ENCODE measurements at regions of chr5 and their contacts with region 1.

Region 1: GRCh38 chr5:179986328-179986727 is 78.6 kb upstream of the TBC1D9B start:
- DNase-seq: no peak
- H3K4me3 ChIP-seq: no peak overlapping the region
- H3K27ac ChIP-seq: no peak overlapping the region
- H3K4me1 ChIP-seq: no peaks in the 10 kb centered on the region
- H3K27me3 ChIP-seq: no peaks in the 10 kb centered on the region
- CTCF ChIP-seq: peak in 2 of 3 experiments; percentile 13 to 38
- EP300 ChIP-seq: no peak
- POLR2A ChIP-seq: no peak

Region 2: DNA sequence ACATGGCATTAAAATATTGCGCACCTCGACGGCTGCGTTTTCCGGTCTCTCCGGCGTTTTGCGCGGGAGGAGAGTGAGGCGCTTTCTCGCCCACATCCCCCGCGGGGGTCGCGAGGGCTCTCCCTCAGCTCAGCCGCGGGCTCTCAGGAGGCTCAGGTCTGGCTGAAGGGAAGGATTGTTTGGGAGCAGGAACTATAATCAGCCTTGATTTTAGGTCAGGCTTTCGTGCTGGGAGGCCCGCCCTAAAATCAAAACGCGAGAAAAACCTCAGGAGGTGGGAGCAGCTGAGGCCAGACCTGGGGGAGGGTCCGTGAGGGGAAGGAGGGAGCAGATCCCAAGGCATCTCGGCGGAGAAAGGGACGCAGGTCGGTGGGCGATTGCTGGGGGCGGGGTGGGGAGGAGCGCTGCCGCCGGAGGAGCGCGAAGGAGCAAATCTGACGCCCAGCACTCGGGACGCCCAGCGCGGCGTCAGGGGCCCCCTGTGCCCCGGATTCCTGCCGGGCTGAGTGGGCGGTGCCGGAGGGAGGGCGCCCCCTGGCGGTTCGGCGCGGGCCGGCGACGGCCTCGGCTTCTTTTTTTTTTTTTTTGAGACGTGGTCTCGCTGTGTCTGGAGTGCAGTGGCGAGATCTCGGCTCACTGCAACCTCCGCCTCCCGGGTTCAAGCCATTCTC is 103.9 kb after region 1 on chr5:
- intact Hi-C with region 1: loop called (anchors 5 kb)
- DNase-seq: no peak
- H3K4me3 ChIP-seq: peak overlapping the region; percentile 59 to 68 (median 67)
- H3K27ac ChIP-seq: peak overlapping the region; percentile 72 to 85 (median 82)
- H3K4me1 ChIP-seq: peaks cover 4 to 17% (median 14%) of the 10 kb centered on the region in 4 donors
- H3K27me3 ChIP-seq: no peaks in the 10 kb centered on the region
- CTCF ChIP-seq: peak; percentile 69 to 93 (median 86)
- EP300 ChIP-seq: no peak
- POLR2A ChIP-seq: no peak

Region 3: DNA sequence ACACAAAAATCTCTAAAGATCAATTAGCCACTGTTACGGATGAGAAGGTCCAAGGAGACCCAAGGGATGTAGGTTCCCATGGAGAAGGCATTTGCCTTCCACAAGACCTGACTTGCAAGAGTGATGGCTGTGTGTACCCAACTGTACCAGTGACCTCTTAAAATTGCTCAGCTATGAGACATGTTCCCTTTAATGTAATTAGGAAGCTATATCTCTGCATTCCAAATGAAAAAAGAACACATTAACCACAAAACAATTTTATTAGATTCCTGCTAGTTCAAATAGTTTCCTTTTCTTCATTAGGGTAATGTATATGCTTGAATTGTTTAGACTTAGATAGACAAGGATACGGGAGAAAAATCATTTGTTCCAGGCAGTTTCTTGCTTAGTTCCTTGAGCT is 750.2 kb after region 1 on chr5:
- intact Hi-C with region 1: no loop called
- DNase-seq: no peak
- H3K4me3 ChIP-seq: no peak overlapping the region
- H3K27ac ChIP-seq: no peak overlapping the region
- H3K4me1 ChIP-seq: no peaks in the 10 kb centered on the region
- H3K27me3 ChIP-seq: peaks cover 0 to 16% (median 2%) of the 10 kb centered on the region in 4 donors
- CTCF ChIP-seq: no peak
- EP300 ChIP-seq: no peak
- POLR2A ChIP-seq: no peak